ENCODE measurements at regions of chr16 and their contacts with region 1.

Region 1: GRCh38 chr16:84186685-84187437 is at the start of gene TAF1C:
- DNase-seq: peak; percentile 87
- ATAC-seq: peak; percentile 78
- H3K4me3 Mint-ChIP-seq: peak within 1 kb of the TSS; percentile 91
- H3K27ac Mint-ChIP-seq: peak within 1 kb of the TSS; percentile 60
- H3K4me1 Mint-ChIP-seq: peaks cover 9% of the 10 kb centered on the region; the same call in 1 of the 2 replicates
- H3K27me3 Mint-ChIP-seq: no peaks in the 10 kb centered on the region; the same call in none of the 2 replicates
- CTCF ChIP-seq: peak; percentile 78
- total RNA-seq, gene TAF1C: 71.2 to 89.7 TPM (median 74.7 TPM) in 3 replicates

Region 2: GRCh38 chr16:83878838-83879237 is 308.0 kb before region 1 on chr16:
- CTCF ChIA-PET with region 1: no interaction called
- POLR2A ChIA-PET with region 1: no interaction called
- DNase-seq: no peak
- ATAC-seq: no peak; the same call in 1 of the 2 replicates
- H3K4me3 Mint-ChIP-seq: no peak overlapping the region
- H3K27ac Mint-ChIP-seq: no peak overlapping the region
- H3K4me1 Mint-ChIP-seq: peaks cover 15% of the 10 kb centered on the region
- H3K27me3 Mint-ChIP-seq: peaks cover 18% of the 10 kb centered on the region; the same call in 1 of the 2 replicates
- CTCF ChIP-seq: peak; percentile 37

Region 3: GRCh38 chr16:84084570-84085270 is 102.1 kb before region 1 on chr16:
- CTCF ChIA-PET with region 1: interaction called, 28 read pairs
- POLR2A ChIA-PET with region 1: no interaction called
- DNase-seq: peak; percentile 81
- ATAC-seq: peak; percentile 98
- H3K4me3 Mint-ChIP-seq: no peak overlapping the region
- H3K27ac Mint-ChIP-seq: no peak overlapping the region
- H3K4me1 Mint-ChIP-seq: no peaks in the 10 kb centered on the region
- H3K27me3 Mint-ChIP-seq: no peaks in the 10 kb centered on the region
- CTCF ChIP-seq: peak; percentile 73

Region 4: GRCh38 chr16:84156342-84156784 is 30.5 kb before region 1 on chr16:
- CTCF ChIA-PET with region 1: interaction called, 18 read pairs
- POLR2A ChIA-PET with region 1: interaction called, 3 read pairs
- DNase-seq: no peak
- ATAC-seq: no peak
- H3K4me3 Mint-ChIP-seq: no peak overlapping the region
- H3K27ac Mint-ChIP-seq: no peak overlapping the region
- H3K4me1 Mint-ChIP-seq: no peaks in the 10 kb centered on the region
- H3K27me3 Mint-ChIP-seq: peaks cover 2% of the 10 kb centered on the region
- CTCF ChIP-seq: no peak

Region 5: DNA sequence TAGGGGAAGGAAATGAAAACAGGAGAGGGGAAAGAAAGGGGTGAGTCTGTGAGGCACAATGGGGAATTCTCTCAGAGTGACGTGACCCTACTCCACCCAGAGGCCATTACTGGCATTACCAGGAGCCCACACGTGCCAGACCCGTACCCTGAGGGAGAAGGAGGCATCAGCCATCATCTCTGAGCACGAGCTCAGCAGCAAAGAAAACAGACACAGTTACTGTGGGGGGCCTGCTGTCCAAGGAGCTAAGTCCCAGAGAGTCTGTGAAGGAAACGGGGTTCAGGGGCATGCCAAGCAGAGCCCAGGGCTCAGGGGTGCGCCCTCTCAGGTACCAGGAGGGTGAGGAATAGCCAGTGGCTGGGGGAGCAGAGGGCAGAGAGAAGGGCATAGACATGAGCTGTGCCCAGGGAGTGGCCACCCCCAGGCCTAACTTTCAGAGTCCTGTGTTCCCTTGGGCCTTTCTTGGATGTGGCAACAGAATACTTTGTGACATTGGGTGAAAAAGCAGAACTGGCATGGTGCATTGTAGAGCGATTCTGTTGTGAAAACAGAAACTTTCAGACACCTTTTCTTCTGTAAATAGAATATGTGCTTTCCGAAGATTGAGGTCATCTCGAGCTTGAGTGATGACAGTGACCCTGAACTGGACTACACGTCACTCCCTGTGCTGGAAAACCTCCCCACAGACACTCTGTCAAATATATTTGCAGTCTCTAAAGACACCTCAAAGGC is 11.3 kb before region 1 on chr16:
- CTCF ChIA-PET with region 1: interaction called, 51 read pairs
- POLR2A ChIA-PET with region 1: no interaction called
- DNase-seq: peak; percentile 62
- ATAC-seq: peak; percentile 83
- H3K4me3 Mint-ChIP-seq: no peak overlapping the region
- H3K27ac Mint-ChIP-seq: no peak overlapping the region
- H3K4me1 Mint-ChIP-seq: no peaks in the 10 kb centered on the region
- H3K27me3 Mint-ChIP-seq: no peaks in the 10 kb centered on the region
- CTCF ChIP-seq: peak; percentile 65

Region 6: DNA sequence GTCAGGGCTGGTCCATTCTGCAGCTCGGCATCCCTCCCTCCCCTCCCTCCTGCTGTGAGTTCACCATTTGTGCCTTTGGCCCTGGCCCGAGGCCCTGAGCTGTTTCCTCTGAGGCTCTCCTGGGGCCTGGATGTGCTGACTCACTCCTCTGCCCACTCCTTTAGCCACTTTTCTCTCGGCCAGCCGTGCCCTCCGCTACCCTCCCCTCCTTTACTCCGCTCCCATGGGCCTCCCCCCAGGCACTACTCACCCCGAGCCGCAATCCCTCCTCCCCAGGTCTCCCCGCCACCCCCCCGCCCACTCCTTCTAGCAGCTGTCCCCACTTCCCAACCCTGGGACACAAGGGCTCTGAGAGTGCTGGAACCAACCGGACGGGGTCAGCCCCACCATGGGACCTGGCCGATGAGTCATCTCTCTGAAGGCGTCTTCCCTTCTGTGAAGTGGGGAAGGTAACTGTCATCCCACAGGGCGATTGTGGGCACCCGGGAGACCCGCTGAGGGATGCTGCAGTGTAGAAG is 41.5 kb after region 1 on chr16:
- CTCF ChIA-PET with region 1: interaction called, 16 read pairs
- POLR2A ChIA-PET with region 1: no interaction called
- DNase-seq: peak; percentile 40
- ATAC-seq: peak; percentile 76
- H3K4me3 Mint-ChIP-seq: no peak overlapping the region
- H3K27ac Mint-ChIP-seq: no peak overlapping the region
- H3K4me1 Mint-ChIP-seq: peaks cover 12% of the 10 kb centered on the region
- H3K27me3 Mint-ChIP-seq: no peaks in the 10 kb centered on the region
- CTCF ChIP-seq: no peak

Region 7: GRCh38 chr16:84286578-84287220 is 99.8 kb after region 1 on chr16:
- CTCF ChIA-PET with region 1: no interaction called
- POLR2A ChIA-PET with region 1: no interaction called
- DNase-seq: no peak
- ATAC-seq: no peak
- H3K4me3 Mint-ChIP-seq: no peak overlapping the region
- H3K27ac Mint-ChIP-seq: no peak overlapping the region
- H3K4me1 Mint-ChIP-seq: peaks cover 23% of the 10 kb centered on the region
- H3K27me3 Mint-ChIP-seq: peaks cover 2% of the 10 kb centered on the region; the same call in 1 of the 2 replicates
- CTCF ChIP-seq: no peak

Region 8: GRCh38 chr16:84368308-84368996 is 181.6 kb after region 1 on chr16 and contains the start of gene ATP2C2:
- CTCF ChIA-PET with region 1: interaction called, 11 read pairs
- POLR2A ChIA-PET with region 1: no interaction called
- DNase-seq: peak; percentile 89
- ATAC-seq: peak; percentile 93
- H3K4me3 Mint-ChIP-seq: peak within 1 kb of the TSS; percentile 86
- H3K27ac Mint-ChIP-seq: no peak within 1 kb of the TSS
- H3K4me1 Mint-ChIP-seq: peaks cover 32% of the 10 kb centered on the region
- H3K27me3 Mint-ChIP-seq: peaks cover 32% of the 10 kb centered on the region
- CTCF ChIP-seq: no peak
- total RNA-seq, gene ATP2C2: 2.4 to 4.3 TPM (median 2.8 TPM) in 3 replicates

Measured in WTC11 (cell line).